ENCODE measurements at regions of chr6 and their contacts with region 1.

Region 1: DNA sequence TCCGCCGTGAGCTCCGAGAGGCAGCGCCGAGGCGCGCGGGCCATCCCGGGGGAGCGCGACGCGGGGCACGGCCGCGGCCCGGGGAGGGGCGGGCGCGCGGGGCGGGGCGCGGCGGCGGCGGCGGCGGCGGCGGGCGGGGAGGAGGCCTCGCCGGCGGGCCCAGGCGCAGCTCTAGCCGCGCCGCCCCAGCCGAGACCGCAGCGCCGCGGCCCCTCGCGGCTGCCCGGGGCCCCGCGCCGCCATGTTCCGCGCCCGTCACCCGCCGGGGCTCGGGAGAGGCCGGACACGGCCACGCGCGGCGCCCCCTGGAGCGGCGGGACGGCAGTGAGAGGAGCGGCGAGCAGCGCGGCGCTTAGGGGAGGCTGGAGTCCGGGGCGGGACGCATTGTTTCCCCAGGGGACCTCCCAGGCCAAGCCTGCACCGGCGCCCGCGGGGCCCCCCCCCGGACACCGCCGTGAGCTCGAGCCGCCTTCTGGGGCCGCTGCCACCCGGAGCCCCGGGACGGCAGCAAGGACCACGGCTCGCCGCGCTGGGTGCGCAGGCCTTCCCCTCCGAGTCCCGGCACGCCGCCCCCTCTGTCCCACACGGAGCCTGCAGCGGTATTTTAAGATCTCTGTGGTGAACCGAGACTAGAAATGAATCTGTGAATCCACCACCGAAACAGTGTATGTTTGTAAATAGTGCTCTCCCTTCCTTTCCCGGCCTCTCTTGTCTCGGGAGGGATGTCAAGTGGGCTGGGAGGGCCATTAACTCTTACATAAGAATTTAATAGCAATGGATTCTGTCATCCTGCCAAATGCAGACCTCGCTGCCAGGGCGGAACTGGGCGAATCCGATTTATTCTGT is at the start of gene KIF13A:
- DNase-seq: peak; percentile 83
- H3K4me3 ChIP-seq: peak within 1 kb of the TSS; percentile 49 to 93 (median 84)
- H3K27ac ChIP-seq: peak within 1 kb of the TSS; percentile 68
- H3K4me1 ChIP-seq: peaks cover 20% of the 10 kb centered on the region
- H3K27me3 ChIP-seq: no peaks in the 10 kb centered on the region
- CTCF ChIP-seq: peak in 1 of 2 donors; percentile 23
- POLR2A ChIP-seq: peak; percentile 53
- total RNA-seq, gene KIF13A: 55.5 and 65.8 TPM in 2 replicates

Region 2: DNA sequence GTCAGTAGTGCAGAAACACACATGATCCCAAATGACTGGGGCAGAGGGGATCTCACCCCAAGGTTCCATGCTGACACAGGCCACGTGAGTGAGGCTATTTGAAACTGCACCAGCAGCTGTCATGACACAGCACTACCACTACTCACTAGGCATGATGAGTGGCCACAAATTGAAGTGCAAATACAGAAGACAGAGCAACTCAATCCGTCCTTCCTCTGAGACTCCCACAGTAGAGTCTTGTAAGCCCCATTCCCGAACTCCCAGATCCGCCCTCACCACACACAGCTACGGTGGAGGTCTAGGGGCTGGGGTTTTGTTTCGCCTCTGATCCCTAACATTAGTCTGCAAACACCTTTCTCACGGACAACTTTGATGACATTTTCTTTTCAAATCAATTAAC is 167.7 kb before region 1 on chr6:
- CTCF ChIA-PET with region 1: interaction called, 8 read pairs
- POLR2A ChIA-PET with region 1: no interaction called
- dilution Hi-C with region 1: no loop called
- intact Hi-C with region 1: loop called (anchors 1 kb)
- DNase-seq: no peak
- H3K4me3 ChIP-seq: no peak overlapping the region
- H3K27ac ChIP-seq: no peak overlapping the region
- H3K4me1 ChIP-seq: no peaks in the 10 kb centered on the region
- H3K27me3 ChIP-seq: no peaks in the 10 kb centered on the region
- CTCF ChIP-seq: no peak
- POLR2A ChIP-seq: no peak

Region 3: DNA sequence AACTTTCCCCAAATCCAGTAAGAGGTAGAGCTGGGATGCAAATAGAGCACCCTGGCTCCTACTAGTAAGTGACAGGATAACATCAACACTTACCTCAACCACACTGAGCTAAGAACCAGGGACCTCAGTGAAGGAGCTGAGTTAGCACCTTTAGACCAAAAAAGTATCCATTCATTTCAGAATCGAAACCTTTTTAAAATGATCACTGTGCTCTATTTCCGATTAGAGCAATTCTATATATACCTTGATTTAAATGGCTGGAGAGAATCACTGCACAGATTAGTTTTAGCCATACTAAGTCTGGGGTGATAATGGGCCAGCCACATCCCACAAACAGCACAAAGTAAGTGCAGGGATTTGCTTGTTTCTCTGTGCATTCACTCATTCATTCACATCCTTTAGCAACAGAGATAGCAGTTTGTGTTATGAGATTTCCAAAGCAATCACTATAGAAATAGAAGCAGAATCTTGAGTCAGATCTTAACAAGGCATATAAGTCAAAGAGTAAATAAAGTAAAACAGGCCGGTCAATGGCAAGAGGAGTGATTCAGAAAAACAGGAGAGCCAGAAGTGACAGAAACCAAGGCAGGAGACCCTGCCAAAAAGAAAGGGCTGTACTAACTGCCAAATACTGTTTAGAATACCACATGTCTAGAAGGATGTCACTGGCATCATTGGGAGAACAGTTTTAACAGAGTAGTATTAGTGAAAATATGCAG is 136.6 kb before region 1 on chr6:
- CTCF ChIA-PET with region 1: interaction called, 8 read pairs
- POLR2A ChIA-PET with region 1: no interaction called
- dilution Hi-C with region 1: no loop called
- intact Hi-C with region 1: loop called (anchors 2 kb)
- DNase-seq: peak; percentile 65
- H3K4me3 ChIP-seq: peak overlapping the region in 1 of 3 experiments; percentile 51
- H3K27ac ChIP-seq: peak overlapping the region; percentile 93
- H3K4me1 ChIP-seq: peaks cover 49% of the 10 kb centered on the region
- H3K27me3 ChIP-seq: no peaks in the 10 kb centered on the region
- CTCF ChIP-seq: no peak
- POLR2A ChIP-seq: no peak

Region 4: DNA sequence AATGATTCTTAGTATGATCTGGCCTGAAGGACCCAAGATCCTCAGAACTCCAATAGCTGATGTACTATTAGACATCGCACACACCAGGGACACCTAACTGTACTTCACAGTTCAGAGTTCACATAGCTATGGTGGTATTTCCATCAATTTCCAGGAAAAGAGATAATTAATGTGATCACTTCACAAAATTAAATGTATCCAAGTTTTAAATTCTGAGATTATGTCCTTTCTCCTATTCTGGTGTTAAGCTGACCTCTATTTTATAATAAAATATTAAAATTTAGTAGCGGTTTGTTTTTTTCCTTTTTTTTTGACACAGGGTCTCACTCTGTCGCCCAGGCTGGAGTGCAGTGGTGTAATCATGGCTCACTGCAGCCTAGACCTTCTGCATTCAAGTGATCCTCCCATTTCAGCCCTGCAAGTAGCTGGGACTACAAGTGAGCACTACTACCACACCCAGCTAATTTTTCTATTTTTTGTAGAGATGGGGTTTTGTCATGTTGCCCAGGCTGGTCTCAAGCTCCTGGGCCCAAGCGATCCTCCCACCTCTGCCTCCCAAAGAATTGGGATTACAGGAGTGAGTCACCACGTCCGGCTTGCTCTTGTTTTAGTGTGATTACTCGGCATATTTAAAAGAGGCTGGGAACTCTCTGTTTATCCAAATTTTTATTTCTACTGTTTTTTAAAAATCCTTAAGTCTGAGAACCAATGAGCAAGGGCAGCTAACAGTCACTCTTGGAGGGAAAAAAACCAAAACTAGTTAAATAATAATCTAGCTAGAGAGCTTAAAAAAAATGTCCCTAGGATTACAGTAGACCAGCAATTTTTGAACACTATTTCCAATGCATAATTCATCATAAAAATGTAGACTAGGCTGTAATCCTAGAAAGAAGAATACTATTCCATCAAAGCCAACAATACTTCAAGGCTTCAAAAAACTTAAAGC is 16.4 kb before region 1 on chr6:
- CTCF ChIA-PET with region 1: interaction called, 10 read pairs
- POLR2A ChIA-PET with region 1: no interaction called
- dilution Hi-C with region 1: no loop called
- intact Hi-C with region 1: loop called (anchors 2 kb)
- DNase-seq: peak; percentile 41
- H3K4me3 ChIP-seq: no peak overlapping the region
- H3K27ac ChIP-seq: peak overlapping the region; percentile 26
- H3K4me1 ChIP-seq: peaks cover 33% of the 10 kb centered on the region
- H3K27me3 ChIP-seq: no peaks in the 10 kb centered on the region
- CTCF ChIP-seq: no peak
- POLR2A ChIP-seq: no peak

Region 5: GRCh38 chr6:18264219-18264922 is 276.6 kb after region 1 on chr6 and contains the start of gene DEK:
- CTCF ChIA-PET with region 1: no interaction called
- POLR2A ChIA-PET with region 1: no interaction called
- dilution Hi-C with region 1: no loop called
- intact Hi-C with region 1: loop called (anchors 5 kb)
- DNase-seq: peak; percentile 80
- H3K4me3 ChIP-seq: peak within 1 kb of the TSS; percentile 63 to 94 (median 90)
- H3K27ac ChIP-seq: peak within 1 kb of the TSS; percentile 93
- H3K4me1 ChIP-seq: peaks cover 32% of the 10 kb centered on the region
- H3K27me3 ChIP-seq: peaks cover 6 to 8% of the 10 kb centered on the region in 2 experiments
- CTCF ChIP-seq: peak; percentile 26 to 50
- POLR2A ChIP-seq: peak; percentile 46
- total RNA-seq, gene DEK: 118 and 120 TPM in 2 replicates

Measured in endothelial cell of umbilical vein (primary cell).